Activated CD4-positive, alpha-beta T cell treated with anti-CD3 and anti-CD28 coated beads for 36 hours (primary cell): ENCODE measurements at regions of chr5 and their contacts with region 1.

Region 1: DNA sequence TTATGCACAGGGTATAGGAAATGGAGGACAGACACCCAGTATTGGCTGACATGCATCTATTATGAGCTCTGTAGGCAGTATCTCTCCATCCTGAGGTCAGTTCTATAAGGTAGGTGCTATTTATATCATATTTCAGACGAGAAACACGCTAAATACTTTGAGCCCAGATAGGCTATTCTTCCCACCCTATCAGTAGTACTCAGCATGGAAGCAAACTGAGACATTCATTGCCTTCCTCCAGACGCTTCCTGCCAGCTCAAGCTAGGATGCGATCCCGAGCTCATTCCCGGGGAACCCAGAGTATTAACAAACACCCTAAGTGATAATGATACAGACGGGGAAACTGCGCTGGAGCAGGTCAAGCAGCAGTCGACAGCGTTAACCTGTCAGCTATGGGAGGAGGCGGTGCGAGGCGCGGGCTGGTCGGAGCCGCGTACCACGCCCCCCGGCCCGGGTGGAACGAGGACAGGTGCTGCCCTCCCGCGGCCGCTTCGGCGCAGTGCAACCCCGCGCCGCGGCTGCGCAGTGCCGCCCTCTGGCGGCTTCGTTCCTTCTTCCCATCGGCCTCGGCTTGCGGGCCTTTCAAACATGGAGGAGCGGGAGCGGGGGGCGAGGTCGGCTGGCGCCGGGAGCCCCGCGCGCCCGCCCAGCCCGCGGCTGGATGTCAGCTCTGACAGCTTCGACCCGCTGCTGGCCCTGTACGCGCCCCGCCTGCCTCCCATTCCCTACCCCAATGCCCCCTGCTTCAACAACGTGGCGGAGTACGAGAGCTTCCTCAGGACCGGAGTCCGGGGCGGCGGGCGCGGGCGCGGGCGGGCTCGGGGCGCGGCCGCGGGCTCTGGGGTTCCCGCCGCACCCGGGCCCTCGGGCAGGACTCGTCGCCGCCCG is at the start of gene LSM11:
- DNase-seq: peak; percentile 95
- ATAC-seq: peak; percentile 92
- H3K4me3 Mint-ChIP-seq: peak within 1 kb of the TSS; percentile 93
- H3K27ac Mint-ChIP-seq: peak within 1 kb of the TSS; percentile 89
- H3K4me1 Mint-ChIP-seq: peaks cover 36% of the 10 kb centered on the region
- H3K27me3 Mint-ChIP-seq: no peaks in the 10 kb centered on the region
- total RNA-seq, gene LSM11: 6.2 to 8.0 TPM

Region 2: DNA sequence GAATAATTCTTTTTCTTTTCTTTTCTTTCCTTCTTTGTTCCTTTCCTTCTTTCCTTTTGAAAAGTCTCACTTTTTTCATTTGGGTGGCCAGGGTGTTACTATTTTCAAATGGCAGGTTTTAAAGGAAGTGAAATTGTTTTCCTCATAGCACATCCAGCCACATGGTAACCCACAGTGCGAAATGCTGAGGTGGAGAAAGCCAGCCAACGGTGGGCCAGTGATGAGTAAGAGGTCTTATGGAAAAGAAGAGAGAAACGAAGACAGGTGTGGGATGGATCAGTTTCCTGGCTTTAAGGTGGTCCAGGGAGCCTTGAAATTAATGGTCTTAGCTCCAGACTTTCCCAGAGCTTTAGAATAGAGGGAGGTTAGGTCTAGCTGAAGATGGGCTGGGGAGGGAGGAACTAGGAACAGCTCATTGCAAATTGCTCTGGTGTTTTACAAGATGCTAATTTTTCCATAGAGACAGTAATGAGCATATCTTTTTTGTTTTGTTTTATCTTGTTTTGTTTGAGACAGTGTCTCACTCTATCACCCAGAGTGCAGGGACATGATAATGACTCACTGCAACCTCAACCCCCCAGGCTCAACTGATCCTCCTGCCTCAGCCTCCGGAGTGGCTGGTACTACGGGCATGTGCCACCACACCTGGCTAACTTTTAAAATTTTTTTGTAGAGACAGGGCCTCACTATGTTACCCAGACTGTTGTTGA is 545.0 kb before region 1 on chr5:
- CTCF ChIA-PET with region 1: no interaction called
- POLR2A ChIA-PET with region 1: no interaction called
- intact Hi-C with region 1: no loop called
- DNase-seq: peak; percentile 75
- ATAC-seq: peak; percentile 78
- H3K4me3 Mint-ChIP-seq: peak overlapping the region; percentile 66
- H3K27ac Mint-ChIP-seq: peak overlapping the region; percentile 98
- H3K4me1 Mint-ChIP-seq: peaks cover 94% of the 10 kb centered on the region
- H3K27me3 Mint-ChIP-seq: no peaks in the 10 kb centered on the region

Region 3: DNA sequence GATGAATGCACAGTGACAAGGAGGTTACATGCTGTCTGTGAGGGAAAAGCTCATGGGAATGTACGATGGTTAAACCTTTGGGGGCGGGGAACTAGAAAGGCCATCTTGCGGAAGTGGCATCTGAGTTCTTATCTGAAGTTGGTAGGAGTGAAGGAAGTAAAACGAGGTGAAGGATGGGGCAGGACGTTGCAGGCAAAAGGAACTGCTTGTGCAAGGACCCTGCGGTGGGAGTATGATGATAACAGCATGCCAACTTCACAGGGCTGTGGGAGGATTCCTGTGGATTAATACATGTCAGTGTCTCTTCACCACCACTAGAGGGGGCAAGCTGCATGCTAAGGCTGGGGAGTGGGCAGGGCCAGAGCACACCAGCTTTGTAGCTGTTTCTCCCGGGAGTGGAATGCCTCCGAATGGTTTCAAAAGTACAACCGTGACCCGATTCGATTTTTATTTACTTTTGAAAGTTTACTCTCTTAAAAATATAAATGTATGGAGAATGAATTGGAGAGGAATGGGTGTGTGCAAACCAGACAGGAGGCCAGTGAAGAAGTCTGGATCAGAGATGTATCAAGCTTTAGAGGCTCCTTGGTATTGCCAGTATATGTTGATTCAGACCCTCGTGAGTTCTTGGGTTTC is 415.0 kb before region 1 on chr5:
- CTCF ChIA-PET with region 1: interaction called, 9 read pairs
- POLR2A ChIA-PET with region 1: no interaction called
- intact Hi-C with region 1: loop called (anchors 1 to 5 kb)
- DNase-seq: peak; percentile 77
- ATAC-seq: peak; percentile 97
- H3K4me3 Mint-ChIP-seq: peak overlapping the region; percentile 9
- H3K27ac Mint-ChIP-seq: peak overlapping the region; percentile 85
- H3K4me1 Mint-ChIP-seq: peaks cover 50% of the 10 kb centered on the region
- H3K27me3 Mint-ChIP-seq: no peaks in the 10 kb centered on the region

Region 4: GRCh38 chr5:157431544-157432200 is 311.7 kb before region 1 on chr5:
- CTCF ChIA-PET with region 1: interaction called, 30 read pairs
- POLR2A ChIA-PET with region 1: no interaction called
- intact Hi-C with region 1: loop called (anchors 1 kb)
- DNase-seq: peak; percentile 53
- ATAC-seq: peak; percentile 99
- H3K4me3 Mint-ChIP-seq: no peak overlapping the region
- H3K27ac Mint-ChIP-seq: no peak overlapping the region
- H3K4me1 Mint-ChIP-seq: peaks cover 5% of the 10 kb centered on the region
- H3K27me3 Mint-ChIP-seq: peaks cover 2% of the 10 kb centered on the region

Region 5: GRCh38 chr5:157523976-157524375 is 219.4 kb before region 1 on chr5:
- CTCF ChIA-PET with region 1: no interaction called
- POLR2A ChIA-PET with region 1: no interaction called
- intact Hi-C with region 1: no loop called
- DNase-seq: no peak
- ATAC-seq: no peak
- H3K4me3 Mint-ChIP-seq: no peak overlapping the region
- H3K27ac Mint-ChIP-seq: no peak overlapping the region
- H3K4me1 Mint-ChIP-seq: peaks cover 13% of the 10 kb centered on the region
- H3K27me3 Mint-ChIP-seq: no peaks in the 10 kb centered on the region

Region 6: GRCh38 chr5:157540707-157541446 is 202.5 kb before region 1 on chr5:
- CTCF ChIA-PET with region 1: interaction called, 9 read pairs
- POLR2A ChIA-PET with region 1: no interaction called
- intact Hi-C with region 1: loop called in 1 of 2 experiments (anchors 1 kb)
- DNase-seq: peak; percentile 68
- ATAC-seq: peak; percentile 85
- H3K4me3 Mint-ChIP-seq: peak overlapping the region; percentile 21
- H3K27ac Mint-ChIP-seq: peak overlapping the region; percentile 79
- H3K4me1 Mint-ChIP-seq: peaks cover 73% of the 10 kb centered on the region
- H3K27me3 Mint-ChIP-seq: no peaks in the 10 kb centered on the region

Region 7: GRCh38 chr5:157651623-157652549 is 91.5 kb before region 1 on chr5 and contains the start of gene SOX30:
- CTCF ChIA-PET with region 1: interaction called, 12 read pairs
- POLR2A ChIA-PET with region 1: no interaction called
- intact Hi-C with region 1: loop called (anchors 1 to 5 kb)
- DNase-seq: peak; percentile 92
- ATAC-seq: peak; percentile 99
- H3K4me3 Mint-ChIP-seq: peak within 1 kb of the TSS; percentile 69
- H3K27ac Mint-ChIP-seq: peak within 1 kb of the TSS; percentile 83
- H3K4me1 Mint-ChIP-seq: peaks cover 15% of the 10 kb centered on the region
- H3K27me3 Mint-ChIP-seq: no peaks in the 10 kb centered on the region
- total RNA-seq, gene SOX30: 0.18 to 0.44 TPM

Region 8: DNA sequence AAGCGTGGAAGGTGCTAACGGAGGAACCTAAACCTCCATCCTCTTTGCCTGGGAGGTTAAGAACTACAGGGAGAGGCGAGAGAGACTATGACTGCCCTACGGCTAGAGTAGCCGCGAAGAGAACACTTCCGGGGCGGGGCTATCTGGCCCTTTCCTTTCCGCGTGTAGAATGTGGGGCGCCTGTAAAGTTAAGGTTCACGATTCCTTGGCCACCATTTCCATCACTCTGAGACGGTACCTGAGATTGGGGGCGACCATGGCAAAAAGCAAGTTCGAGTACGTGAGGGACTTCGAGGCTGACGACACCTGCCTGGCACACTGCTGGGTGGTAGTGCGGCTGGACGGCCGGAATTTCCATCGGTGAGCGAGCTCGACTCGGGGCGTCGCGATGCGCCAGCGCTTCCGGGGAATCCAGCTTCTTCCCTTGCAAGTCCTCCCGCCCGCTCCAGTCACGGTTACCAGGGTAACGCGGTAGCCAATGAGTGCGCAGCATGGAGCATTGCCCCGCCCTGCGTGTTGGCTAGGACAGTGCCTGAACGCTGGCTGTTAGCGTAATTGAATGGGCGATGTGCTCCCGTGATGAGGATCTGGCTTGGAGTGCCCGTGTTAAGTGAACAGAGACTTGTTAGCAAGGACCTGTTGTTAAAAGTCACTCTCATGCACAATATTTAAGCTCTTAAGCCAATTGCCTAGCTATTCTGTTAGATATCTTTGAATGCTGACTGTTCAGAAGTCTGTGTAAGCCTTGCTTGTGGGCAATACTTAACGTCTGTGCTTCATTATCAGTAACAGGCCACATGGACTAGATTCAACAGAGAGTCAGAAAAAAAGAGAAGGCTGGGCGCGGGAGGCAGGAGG is 11.9 kb before region 1 on chr5 and contains the start of gene THG1L:
- CTCF ChIA-PET with region 1: interaction called, 23 read pairs
- POLR2A ChIA-PET with region 1: interaction called, 8 read pairs
- intact Hi-C with region 1: loop called (anchors 1 kb)
- DNase-seq: peak; percentile 99
- ATAC-seq: peak; percentile 95
- H3K4me3 Mint-ChIP-seq: peak within 1 kb of the TSS; percentile 86
- H3K27ac Mint-ChIP-seq: peak within 1 kb of the TSS; percentile 96
- H3K4me1 Mint-ChIP-seq: peaks cover 27% of the 10 kb centered on the region
- H3K27me3 Mint-ChIP-seq: no peaks in the 10 kb centered on the region
- total RNA-seq, gene THG1L: 29.9 to 33.8 TPM

Region 9: DNA sequence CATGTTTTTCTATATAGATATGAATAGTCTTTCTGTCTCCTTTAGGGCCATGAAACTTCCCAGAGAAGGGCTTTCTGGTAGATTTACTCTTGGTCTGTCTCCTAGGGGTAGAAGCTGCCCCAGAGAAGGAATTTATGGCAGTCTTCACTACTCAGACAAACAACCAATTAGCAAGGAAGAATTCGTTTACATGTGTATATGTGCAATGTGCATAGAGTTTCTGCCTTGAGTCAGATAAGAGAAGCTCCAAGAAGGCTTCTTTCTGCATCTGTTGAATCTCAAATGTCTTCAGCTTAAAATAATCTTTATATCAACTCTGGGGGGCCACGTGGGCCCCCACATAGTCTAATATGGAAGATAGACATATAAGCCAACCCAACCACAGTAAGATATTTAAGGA is 123.1 kb after region 1 on chr5:
- CTCF ChIA-PET with region 1: no interaction called
- POLR2A ChIA-PET with region 1: no interaction called
- intact Hi-C with region 1: no loop called
- DNase-seq: no peak
- ATAC-seq: no peak
- H3K4me3 Mint-ChIP-seq: no peak overlapping the region
- H3K27ac Mint-ChIP-seq: no peak overlapping the region
- H3K4me1 Mint-ChIP-seq: peaks cover 29% of the 10 kb centered on the region
- H3K27me3 Mint-ChIP-seq: no peaks in the 10 kb centered on the region